ENCODE measurements at regions of chrX and their contacts with region 1.

Region 1: DNA sequence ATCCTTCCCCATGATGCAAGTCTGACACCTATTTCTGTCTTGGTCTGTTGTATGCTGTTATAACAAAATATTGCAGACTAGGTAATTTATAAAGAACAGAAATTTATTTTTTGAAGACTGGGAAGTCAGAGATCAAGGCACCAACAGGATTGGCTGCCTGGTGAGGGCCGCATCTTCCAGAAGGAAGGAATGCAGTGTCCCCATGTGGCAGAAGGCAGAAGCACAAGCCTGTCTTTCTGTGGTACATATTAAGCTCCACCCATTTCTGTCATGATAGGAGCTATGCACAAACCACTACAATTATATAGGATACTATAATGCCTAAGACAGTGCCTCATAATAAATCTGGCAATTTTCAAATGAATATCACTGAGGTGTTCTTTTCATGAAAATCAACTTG is 502.3 kb upstream of the DIAPH2 start:
- DNase-seq: no peak
- H3K4me3 ChIP-seq: no peak overlapping the region
- H3K27ac ChIP-seq: no peak overlapping the region
- H3K4me1 ChIP-seq: peaks cover 0 to 4% (median 0%) of the 10 kb centered on the region in 4 experiments; a peak in 3 of 7 replicates
- H3K27me3 ChIP-seq: no peaks in the 10 kb centered on the region
- CTCF ChIP-seq: peak; percentile 52 to 70 (median 62)
- EP300 ChIP-seq: no peak
- POLR2A ChIP-seq: no peak
- RAD21 ChIP-seq: peak; percentile 82 to 86

Region 2: GRCh38 chrX:95764972-95765451 is 417.4 kb before region 1 on chrX:
- CTCF ChIA-PET with region 1: interaction called, 13 read pairs
- POLR2A ChIA-PET with region 1: no interaction called
- DNase-seq: peak in 1 of 2 experiments; percentile 41
- H3K4me3 ChIP-seq: peak overlapping the region in 1 of 4 experiments; percentile 54; a peak in 2 of 8 replicates
- H3K27ac ChIP-seq: no peak overlapping the region; the same call in 1 of the 2 replicates
- H3K4me1 ChIP-seq: peaks cover 0 to 3% (median 1%) of the 10 kb centered on the region in 4 experiments; a peak in 2 of 7 replicates
- H3K27me3 ChIP-seq: no peaks in the 10 kb centered on the region
- CTCF ChIP-seq: peak in 2 of 3 experiments; percentile 39 to 48; a peak in 3 of 4 replicates
- EP300 ChIP-seq: no peak
- POLR2A ChIP-seq: no peak
- RAD21 ChIP-seq: peak; percentile 60 to 72

Region 3: DNA sequence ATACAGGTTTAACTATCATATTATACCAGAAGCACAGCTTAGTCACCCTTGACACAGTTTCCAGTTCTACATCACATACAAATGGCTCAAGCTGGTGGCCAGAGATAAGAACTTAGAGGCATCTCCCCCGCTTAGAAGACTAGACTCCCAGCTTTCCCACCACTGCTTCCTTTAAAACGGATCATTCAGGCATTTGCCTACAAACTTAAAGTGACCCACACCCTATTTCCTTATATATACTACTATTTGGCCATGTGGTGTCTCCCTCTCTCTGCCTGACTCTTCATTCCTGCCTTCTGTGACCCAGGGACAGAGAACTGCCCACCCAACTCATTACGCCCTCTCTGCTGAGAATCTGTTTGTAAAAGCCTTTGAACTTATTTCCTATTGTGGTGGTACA is 278.9 kb before region 1 on chrX:
- CTCF ChIA-PET with region 1: interaction called, 15 read pairs
- POLR2A ChIA-PET with region 1: no interaction called
- DNase-seq: no peak
- H3K4me3 ChIP-seq: no peak overlapping the region
- H3K27ac ChIP-seq: no peak overlapping the region
- H3K4me1 ChIP-seq: no peaks in the 10 kb centered on the region
- H3K27me3 ChIP-seq: no peaks in the 10 kb centered on the region
- CTCF ChIP-seq: peak in 1 of 3 experiments; percentile 35; a peak in 2 of 4 replicates
- EP300 ChIP-seq: no peak
- POLR2A ChIP-seq: no peak
- RAD21 ChIP-seq: peak; percentile 51 to 64